Ovary (tissue), 10 donors: ENCODE measurements at regions of chr17 and their contacts with region 1.

Region 1: DNA sequence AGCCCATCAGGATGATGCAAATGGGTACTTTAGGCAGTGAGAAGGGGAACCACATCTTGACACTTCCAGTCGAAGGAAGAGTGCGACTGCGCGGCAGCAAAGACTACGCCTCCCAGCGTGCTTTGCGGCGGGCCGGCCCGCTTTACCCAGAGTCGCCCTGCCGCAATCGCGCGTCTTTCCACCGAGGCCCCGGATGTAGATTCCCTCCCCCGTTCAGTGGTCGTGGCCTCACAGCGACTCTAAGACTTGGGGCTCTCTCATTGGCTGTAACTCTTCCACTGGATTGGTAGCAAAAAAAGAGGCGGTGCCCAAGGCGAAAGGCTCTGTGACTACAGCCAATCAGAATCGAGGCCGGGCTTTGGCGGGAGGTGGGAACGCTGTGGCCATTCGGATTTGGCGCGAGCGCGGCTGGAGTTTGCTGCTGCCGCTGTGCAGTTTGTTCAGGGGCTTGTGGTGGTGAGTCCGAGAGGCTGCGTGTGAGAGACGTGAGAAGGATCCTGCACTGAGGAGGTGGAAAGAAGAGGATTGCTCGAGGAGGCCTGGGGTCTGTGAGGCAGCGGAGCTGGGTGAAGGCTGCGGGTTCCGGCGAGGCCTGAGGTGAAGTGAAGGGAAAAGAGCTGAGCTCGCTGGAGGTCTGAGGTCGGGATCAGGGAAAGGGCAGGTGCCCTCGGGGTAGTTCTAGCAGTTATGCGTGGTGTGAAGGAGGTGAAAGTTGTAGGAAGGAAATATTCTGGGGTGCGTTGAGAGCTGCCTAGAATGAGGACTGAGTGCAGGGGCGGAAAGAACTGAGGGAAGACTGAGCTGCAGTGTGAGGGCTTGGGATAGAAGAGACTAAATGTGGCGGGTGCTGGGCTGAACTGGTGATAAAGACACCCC is at the start of gene CDC6:
- DNase-seq: peak; percentile 97 to 99 (median 98)
- H3K4me3 ChIP-seq: peak within 1 kb of the TSS; percentile 41
- H3K27ac ChIP-seq: no peak within 1 kb of the TSS
- H3K4me1 ChIP-seq: peaks cover 2% of the 10 kb centered on the region
- H3K27me3 ChIP-seq: no peaks in the 10 kb centered on the region
- CTCF ChIP-seq: no peak
- EP300 ChIP-seq: no peak
- POLR2A ChIP-seq: no peak
- total RNA-seq, gene CDC6: 0.34 to 3.8 (median 0.76) TPM

Region 2: GRCh38 chr17:39999067-39999466 is 288.7 kb before region 1 on chr17:
- intact Hi-C with region 1: no loop called
- DNase-seq: no peak
- H3K4me3 ChIP-seq: no peak overlapping the region
- H3K27ac ChIP-seq: no peak overlapping the region
- H3K4me1 ChIP-seq: no peaks in the 10 kb centered on the region
- H3K27me3 ChIP-seq: no peaks in the 10 kb centered on the region
- CTCF ChIP-seq: no peak
- EP300 ChIP-seq: no peak
- POLR2A ChIP-seq: no peak

Region 3: DNA sequence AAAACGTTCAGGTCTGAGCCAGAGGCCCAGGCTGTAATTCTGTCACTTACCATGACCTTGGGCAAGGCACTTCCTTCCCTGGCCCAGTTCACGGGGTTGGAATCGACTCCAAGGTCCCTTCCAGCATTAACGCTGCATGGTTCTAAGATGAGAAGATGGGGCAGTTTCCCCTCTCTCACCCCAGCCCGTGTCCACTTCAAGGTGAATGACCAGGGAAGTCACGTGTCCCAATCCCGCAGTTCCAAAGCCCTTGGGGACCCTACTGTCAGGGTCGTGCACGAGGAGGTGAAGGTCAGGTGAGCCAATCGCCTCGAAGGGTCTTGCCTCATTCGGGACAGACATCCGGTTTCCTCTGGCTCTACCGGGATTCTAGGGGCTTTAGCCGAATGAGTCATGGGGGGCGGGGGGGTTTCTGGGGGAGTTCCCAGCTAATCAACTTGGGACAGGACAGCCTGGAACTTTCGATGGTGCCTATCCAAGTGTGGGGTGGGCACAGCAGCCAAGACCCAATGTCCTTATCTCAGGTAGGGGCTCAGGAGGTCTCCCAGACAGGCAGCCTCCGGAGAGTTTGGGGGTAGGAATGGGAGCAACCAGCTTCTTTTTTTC is 273.3 kb before region 1 on chr17:
- intact Hi-C with region 1: loop called in 3 of 4 experiments (anchors 5 to 10 kb)
- DNase-seq: peak; percentile 58 to 76 (median 61)
- H3K4me3 ChIP-seq: no peak overlapping the region
- H3K27ac ChIP-seq: peak overlapping the region; percentile 57 to 70
- H3K4me1 ChIP-seq: peaks cover 17% of the 10 kb centered on the region
- H3K27me3 ChIP-seq: no peaks in the 10 kb centered on the region
- CTCF ChIP-seq: no peak
- EP300 ChIP-seq: no peak
- POLR2A ChIP-seq: no peak

Region 4: GRCh38 chr17:40021451-40021971 is 266.2 kb before region 1 on chr17:
- intact Hi-C with region 1: loop called in 1 of 4 experiments (anchors 10 kb)
- DNase-seq: peak in 2 of 5 donors; percentile 43 to 59
- H3K4me3 ChIP-seq: no peak overlapping the region
- H3K27ac ChIP-seq: peak overlapping the region in 1 of 2 donors; percentile 41
- H3K4me1 ChIP-seq: peaks cover 23% of the 10 kb centered on the region
- H3K27me3 ChIP-seq: no peaks in the 10 kb centered on the region
- CTCF ChIP-seq: no peak
- EP300 ChIP-seq: no peak
- POLR2A ChIP-seq: no peak

Region 5: DNA sequence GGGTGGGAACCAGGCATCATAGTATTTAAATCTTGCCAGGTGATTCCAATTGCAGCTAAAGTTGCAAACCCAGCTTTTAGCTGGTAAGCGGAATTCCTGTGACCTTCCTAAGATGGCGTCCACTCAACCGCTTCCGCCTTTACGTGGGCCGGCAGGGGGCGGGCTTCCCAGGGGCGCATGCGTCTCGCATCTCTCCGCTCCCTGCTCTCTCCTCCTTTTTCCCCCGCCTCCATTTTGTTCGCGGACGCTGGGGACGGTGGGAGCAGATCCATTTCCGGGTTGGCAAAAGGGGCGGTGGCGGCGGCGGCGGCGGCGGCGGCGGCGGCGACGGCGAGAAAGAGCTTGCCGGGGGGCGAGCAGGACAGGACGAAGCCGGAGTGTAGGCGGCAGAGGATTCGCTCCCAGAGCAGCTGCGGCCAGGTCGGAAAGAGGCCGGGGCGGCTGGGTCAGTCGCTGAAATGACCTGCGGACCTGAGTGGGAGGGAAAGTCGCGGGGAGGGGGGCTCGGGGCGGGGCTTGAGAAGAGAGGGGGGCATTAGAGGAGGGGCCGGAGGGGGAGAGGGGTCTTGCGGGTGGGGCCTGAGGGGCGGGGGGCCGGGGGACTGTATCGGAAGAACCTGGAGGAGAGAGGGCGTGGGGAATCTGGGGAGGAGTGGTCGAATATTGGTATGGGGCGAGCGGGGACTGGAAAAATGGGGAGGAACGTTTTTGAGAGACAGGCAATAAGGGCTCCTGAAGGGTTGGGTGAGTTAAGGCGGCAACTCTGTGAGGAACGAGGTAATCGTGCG is 68.5 kb before region 1 on chr17 and contains the start of gene WIPF2:
- intact Hi-C with region 1: loop called in 2 of 4 experiments (anchors 10 kb)
- DNase-seq: peak; percentile 96 to 98 (median 97)
- H3K4me3 ChIP-seq: peak within 1 kb of the TSS; percentile 78
- H3K27ac ChIP-seq: peak within 1 kb of the TSS; percentile 80 to 93
- H3K4me1 ChIP-seq: peaks cover 5% of the 10 kb centered on the region
- H3K27me3 ChIP-seq: no peaks in the 10 kb centered on the region
- CTCF ChIP-seq: peak; percentile 78 to 91 (median 90)
- EP300 ChIP-seq: no peak
- POLR2A ChIP-seq: peak; percentile 75
- total RNA-seq, gene WIPF2: 6.1 to 23.0 (median 18.4) TPM

Region 6: GRCh38 chr17:40224718-40225550 is 62.8 kb before region 1 on chr17:
- intact Hi-C with region 1: loop called in 1 of 4 experiments (anchors 10 kb)
- DNase-seq: no peak
- H3K4me3 ChIP-seq: no peak overlapping the region
- H3K27ac ChIP-seq: no peak overlapping the region
- H3K4me1 ChIP-seq: peaks cover 3% of the 10 kb centered on the region
- H3K27me3 ChIP-seq: no peaks in the 10 kb centered on the region
- CTCF ChIP-seq: no peak
- EP300 ChIP-seq: no peak
- POLR2A ChIP-seq: no peak